Endothelial cell of umbilical vein (primary cell): ENCODE measurements at regions of chr14 and their contacts with region 1.

Region 1: DNA sequence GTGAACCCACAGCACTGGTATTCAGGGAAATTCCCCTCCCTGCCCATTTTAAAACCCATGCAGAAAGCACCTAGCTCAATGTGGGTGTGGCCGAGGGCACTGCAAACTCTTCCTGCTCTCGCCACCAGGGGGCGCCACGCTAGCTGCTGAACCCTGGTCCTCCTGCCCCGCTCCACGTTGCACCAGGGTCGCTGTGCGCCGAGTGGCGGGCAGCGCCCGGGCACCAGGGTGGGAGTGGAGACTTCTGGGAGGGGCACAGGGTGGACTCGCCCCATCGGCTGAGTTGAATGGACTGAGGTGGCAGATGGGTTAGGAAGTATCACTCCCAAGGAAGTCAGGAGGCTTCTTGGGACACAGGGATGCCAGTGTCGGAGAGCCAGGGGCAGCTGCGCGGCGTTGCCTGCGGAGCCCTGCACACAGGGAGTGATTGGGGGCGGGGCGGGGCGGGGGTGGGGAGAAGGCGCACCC is 48.1 kb upstream of the BCL11B start:
- DNase-seq: peak; percentile 32
- H3K4me3 ChIP-seq: no peak overlapping the region
- H3K27ac ChIP-seq: no peak overlapping the region
- H3K4me1 ChIP-seq: no peaks in the 10 kb centered on the region
- H3K27me3 ChIP-seq: no peaks in the 10 kb centered on the region
- CTCF ChIP-seq: peak; percentile 82 to 93
- POLR2A ChIP-seq: no peak

Region 2: DNA sequence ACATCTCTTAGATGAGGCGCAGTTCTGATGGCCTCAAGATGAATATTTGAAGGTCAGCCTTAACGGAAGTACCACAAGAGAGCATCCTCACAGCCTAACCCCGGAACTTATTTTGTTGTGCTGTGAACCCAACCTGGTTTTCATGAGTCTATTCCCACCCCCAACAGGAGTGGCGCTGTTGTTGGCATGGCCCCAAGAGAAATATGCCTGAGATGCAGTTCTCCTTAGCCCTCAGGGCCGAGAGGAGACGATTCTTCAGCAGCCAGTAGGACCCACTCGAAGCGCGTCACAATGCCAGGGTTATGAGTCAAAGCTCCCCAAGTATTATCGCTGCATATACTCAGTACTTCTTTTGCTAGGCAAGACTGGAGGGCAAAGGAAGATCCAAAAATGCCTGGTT is 23.6 kb before region 1 on chr14:
- CTCF ChIA-PET with region 1: no interaction called
- POLR2A ChIA-PET with region 1: no interaction called
- dilution Hi-C with region 1: no loop called
- intact Hi-C with region 1: no loop called
- DNase-seq: no peak
- H3K4me3 ChIP-seq: no peak overlapping the region
- H3K27ac ChIP-seq: no peak overlapping the region
- H3K4me1 ChIP-seq: no peaks in the 10 kb centered on the region
- H3K27me3 ChIP-seq: no peaks in the 10 kb centered on the region
- CTCF ChIP-seq: no peak
- POLR2A ChIP-seq: no peak

Region 3: GRCh38 chr14:99333841-99334635 is 13.9 kb after region 1 on chr14:
- CTCF ChIA-PET with region 1: interaction called, 17 read pairs
- POLR2A ChIA-PET with region 1: no interaction called
- dilution Hi-C with region 1: no loop called
- intact Hi-C with region 1: no loop called
- DNase-seq: no peak
- H3K4me3 ChIP-seq: no peak overlapping the region
- H3K27ac ChIP-seq: no peak overlapping the region
- H3K4me1 ChIP-seq: no peaks in the 10 kb centered on the region
- H3K27me3 ChIP-seq: no peaks in the 10 kb centered on the region
- CTCF ChIP-seq: no peak
- POLR2A ChIP-seq: no peak

Region 4: DNA sequence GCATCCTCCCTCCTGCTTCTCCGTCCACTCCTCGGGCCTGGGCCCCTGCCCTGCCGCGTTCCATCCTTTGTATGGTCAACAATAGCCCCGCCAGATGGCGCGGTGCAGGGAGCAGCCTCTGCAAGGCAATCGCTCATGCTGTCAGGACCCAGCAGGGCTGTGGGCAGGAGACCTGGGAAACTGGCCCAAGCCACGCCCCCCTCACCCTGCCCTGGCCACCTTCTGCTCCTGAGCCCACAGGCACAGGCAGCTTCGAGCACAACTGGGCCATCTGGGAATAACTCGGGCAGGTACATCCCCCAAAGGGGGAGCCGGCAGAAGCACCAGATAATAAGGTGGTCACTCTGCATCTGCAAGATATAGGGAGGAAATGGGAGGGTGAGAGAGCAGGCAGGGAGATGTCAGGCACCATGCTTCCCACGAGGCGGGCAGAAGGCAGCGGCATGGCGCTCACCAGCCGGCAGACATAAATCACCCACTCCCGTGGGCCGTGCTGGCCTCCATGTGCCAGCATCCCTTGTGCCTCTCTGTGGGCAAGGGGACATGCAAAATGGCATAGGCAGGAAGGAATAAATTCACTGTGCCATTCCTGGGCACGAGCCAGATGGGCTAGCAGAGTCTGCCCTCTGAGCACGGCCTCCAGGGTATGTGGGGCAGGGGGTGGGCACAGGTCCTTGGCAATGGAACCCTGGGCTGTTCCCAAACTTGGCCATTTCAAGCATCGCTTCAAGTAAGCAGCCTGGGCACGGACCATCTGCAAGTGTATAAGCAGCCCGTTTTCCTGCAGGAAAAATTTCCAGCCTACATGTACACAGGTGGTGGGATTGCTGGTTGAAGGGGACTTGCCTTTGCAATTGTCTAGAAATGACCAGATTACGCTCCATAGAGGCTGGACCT is 243.3 kb after region 1 on chr14:
- CTCF ChIA-PET with region 1: no interaction called
- POLR2A ChIA-PET with region 1: no interaction called
- dilution Hi-C with region 1: no loop called
- intact Hi-C with region 1: no loop called
- DNase-seq: peak; percentile 77
- H3K4me3 ChIP-seq: no peak overlapping the region
- H3K27ac ChIP-seq: no peak overlapping the region
- H3K4me1 ChIP-seq: peaks cover 5% of the 10 kb centered on the region
- H3K27me3 ChIP-seq: no peaks in the 10 kb centered on the region
- CTCF ChIP-seq: peak; percentile 46 to 70
- POLR2A ChIP-seq: no peak